K562 (cell line): ENCODE measurements at regions of chr10 and their contacts with region 1.

Region 1: GRCh38 chr10:72308320-72308987 is 34.7 kb downstream of the DDIT4 start:
- DNase-seq: peak; percentile 72 to 96 (median 79)
- ATAC-seq: peak; percentile 82
- H3K4me3 ChIP-seq: no peak overlapping the region
- H3K27ac ChIP-seq: peak overlapping the region; percentile 87
- H3K4me1 ChIP-seq: peaks cover 45 to 57% of the 10 kb centered on the region in 2 experiments
- H3K27me3 ChIP-seq: no peaks in the 10 kb centered on the region
- CTCF ChIP-seq: peak in 2 of 3 experiments; percentile 9 to 14; a peak in 2 of 6 replicates
- EP300 ChIP-seq: peak; percentile 78
- POLR2A ChIP-seq: peak; percentile 74
- RAD21 ChIP-seq: peak; percentile 33 to 50

Region 2: DNA sequence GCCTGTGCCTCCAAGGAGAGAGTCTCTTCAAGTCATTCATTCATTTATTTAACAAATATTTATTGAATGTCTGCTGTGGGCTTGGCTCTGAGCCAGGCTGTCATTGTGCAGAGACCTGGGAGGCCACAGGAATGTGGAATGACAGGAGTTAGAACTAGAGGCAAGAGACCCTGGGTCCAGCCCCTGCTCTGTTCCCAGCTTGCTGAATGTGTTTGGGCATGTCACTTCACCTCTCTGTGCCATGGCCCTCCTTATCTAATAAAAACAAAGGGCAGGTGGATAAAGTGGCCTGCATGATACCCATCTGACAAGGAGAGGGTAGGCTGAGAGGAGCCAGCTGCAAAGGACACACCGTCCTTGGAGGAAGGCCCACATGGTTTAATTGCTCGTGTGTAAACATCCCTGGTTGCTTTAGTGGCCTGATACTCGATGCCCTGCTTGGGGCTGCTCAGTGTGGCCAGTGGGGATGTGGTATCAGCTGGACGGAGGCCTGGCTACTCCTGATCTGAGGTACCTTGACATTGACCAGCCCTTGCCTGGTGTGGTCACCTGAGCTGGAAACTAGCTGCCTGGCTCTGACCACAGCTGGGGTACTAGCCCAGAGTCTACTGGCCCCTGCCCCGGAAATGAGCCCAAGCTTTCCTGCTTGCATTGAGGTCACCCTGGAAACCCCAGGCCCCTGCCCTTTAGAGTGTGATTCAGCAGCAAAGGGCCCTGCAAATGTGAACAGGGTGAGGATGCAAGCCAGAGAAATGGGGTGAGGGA is 795.5 kb before region 1 on chr10:
- CTCF ChIA-PET with region 1: no interaction called
- POLR2A ChIA-PET with region 1: no interaction called
- in situ Hi-C with region 1: no loop called
- intact Hi-C with region 1: no loop called
- DNase-seq: no peak
- ATAC-seq: no peak
- H3K4me3 ChIP-seq: no peak overlapping the region
- H3K27ac ChIP-seq: no peak overlapping the region
- H3K4me1 ChIP-seq: no peaks in the 10 kb centered on the region
- H3K27me3 ChIP-seq: peaks cover 36 to 70% of the 10 kb centered on the region in 2 experiments
- CTCF ChIP-seq: no peak
- EP300 ChIP-seq: no peak
- POLR2A ChIP-seq: no peak
- RAD21 ChIP-seq: no peak

Region 3: GRCh38 chr10:72292223-72292691 is 16.2 kb before region 1 on chr10:
- CTCF ChIA-PET with region 1: no interaction called
- POLR2A ChIA-PET with region 1: interaction called, 37 read pairs
- in situ Hi-C with region 1: no loop called
- intact Hi-C with region 1: no loop called
- DNase-seq: no peak
- ATAC-seq: no peak
- H3K4me3 ChIP-seq: no peak overlapping the region
- H3K27ac ChIP-seq: no peak overlapping the region
- H3K4me1 ChIP-seq: peaks cover 41 to 49% of the 10 kb centered on the region in 2 experiments
- H3K27me3 ChIP-seq: no peaks in the 10 kb centered on the region
- CTCF ChIP-seq: no peak
- EP300 ChIP-seq: no peak
- POLR2A ChIP-seq: no peak
- RAD21 ChIP-seq: no peak

Region 4: GRCh38 chr10:72297968-72298773 is 10.3 kb before region 1 on chr10:
- CTCF ChIA-PET with region 1: no interaction called
- POLR2A ChIA-PET with region 1: interaction called, 37 read pairs
- in situ Hi-C with region 1: no loop called
- intact Hi-C with region 1: no loop called
- DNase-seq: peak; percentile 98 to 100 (median 100)
- ATAC-seq: peak; percentile 96
- H3K4me3 ChIP-seq: peak overlapping the region; percentile 55
- H3K27ac ChIP-seq: peak overlapping the region; percentile 94
- H3K4me1 ChIP-seq: peaks cover 32 to 40% of the 10 kb centered on the region in 2 experiments
- H3K27me3 ChIP-seq: no peaks in the 10 kb centered on the region; a peak in 1 of 5 replicates
- CTCF ChIP-seq: peak in 2 of 3 experiments; percentile 19 to 32; a peak in 4 of 6 replicates
- EP300 ChIP-seq: no peak
- POLR2A ChIP-seq: peak; percentile 53
- RAD21 ChIP-seq: peak in 1 of 2 experiments; percentile 43; a peak in 2 of 4 replicates

Region 5: GRCh38 chr10:73723516-73723915 is 1415.1 kb after region 1 on chr10:
- CTCF ChIA-PET with region 1: no interaction called
- POLR2A ChIA-PET with region 1: no interaction called
- in situ Hi-C with region 1: no loop called
- intact Hi-C with region 1: no loop called
- DNase-seq: no peak
- ATAC-seq: no peak
- H3K4me3 ChIP-seq: no peak overlapping the region
- H3K27ac ChIP-seq: no peak overlapping the region
- H3K4me1 ChIP-seq: no peaks in the 10 kb centered on the region
- H3K27me3 ChIP-seq: no peaks in the 10 kb centered on the region
- CTCF ChIP-seq: no peak
- EP300 ChIP-seq: no peak
- POLR2A ChIP-seq: no peak
- RAD21 ChIP-seq: no peak